Activated CD4-positive, alpha-beta T cell treated with anti-CD3 and anti-CD28 coated beads for 36 hours (primary cell): ENCODE measurements at regions of chr19 and their contacts with region 1.

Region 1: GRCh38 chr19:43651758-43652545 is 12.3 kb upstream of the CADM4 start:
- DNase-seq: peak; percentile 66
- ATAC-seq: no peak
- H3K4me3 Mint-ChIP-seq: no peak overlapping the region
- H3K27ac Mint-ChIP-seq: no peak overlapping the region
- H3K4me1 Mint-ChIP-seq: no peaks in the 10 kb centered on the region
- H3K27me3 Mint-ChIP-seq: no peaks in the 10 kb centered on the region

Region 2: DNA sequence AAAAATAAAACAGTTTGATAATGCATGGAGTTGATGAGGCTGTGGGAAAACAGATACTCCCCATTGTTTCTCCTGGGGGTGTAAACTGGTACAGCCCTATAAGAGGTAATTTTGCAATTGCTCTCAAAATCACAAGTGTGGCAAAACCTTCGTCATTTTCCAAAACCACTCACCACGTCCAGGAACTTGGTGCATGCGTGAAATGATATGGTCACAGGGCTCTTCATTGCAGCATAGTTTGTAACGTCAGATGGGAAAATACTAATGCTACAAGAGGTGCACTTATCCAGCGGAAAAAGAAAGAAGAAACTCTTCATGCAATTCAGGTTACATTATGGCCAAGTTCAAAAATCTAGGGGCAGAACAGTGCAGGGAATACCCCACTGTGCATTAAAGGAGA is 29.9 kb after region 1 on chr19:
- CTCF ChIA-PET with region 1: no interaction called
- POLR2A ChIA-PET with region 1: interaction called, 12 read pairs
- intact Hi-C with region 1: no loop called
- DNase-seq: no peak
- ATAC-seq: no peak
- H3K4me3 Mint-ChIP-seq: no peak overlapping the region
- H3K27ac Mint-ChIP-seq: no peak overlapping the region
- H3K4me1 Mint-ChIP-seq: peaks cover 1% of the 10 kb centered on the region
- H3K27me3 Mint-ChIP-seq: no peaks in the 10 kb centered on the region

Region 3: GRCh38 chr19:44042147-44042546 is 390.2 kb after region 1 on chr19:
- CTCF ChIA-PET with region 1: no interaction called
- POLR2A ChIA-PET with region 1: no interaction called
- intact Hi-C with region 1: no loop called
- DNase-seq: no peak
- ATAC-seq: no peak
- H3K4me3 Mint-ChIP-seq: no peak overlapping the region
- H3K27ac Mint-ChIP-seq: no peak overlapping the region
- H3K4me1 Mint-ChIP-seq: no peaks in the 10 kb centered on the region
- H3K27me3 Mint-ChIP-seq: peaks cover 15% of the 10 kb centered on the region